AG04450 (cell line): ENCODE measurements at regions of chr11 and their contacts with region 1.

Region 1: DNA sequence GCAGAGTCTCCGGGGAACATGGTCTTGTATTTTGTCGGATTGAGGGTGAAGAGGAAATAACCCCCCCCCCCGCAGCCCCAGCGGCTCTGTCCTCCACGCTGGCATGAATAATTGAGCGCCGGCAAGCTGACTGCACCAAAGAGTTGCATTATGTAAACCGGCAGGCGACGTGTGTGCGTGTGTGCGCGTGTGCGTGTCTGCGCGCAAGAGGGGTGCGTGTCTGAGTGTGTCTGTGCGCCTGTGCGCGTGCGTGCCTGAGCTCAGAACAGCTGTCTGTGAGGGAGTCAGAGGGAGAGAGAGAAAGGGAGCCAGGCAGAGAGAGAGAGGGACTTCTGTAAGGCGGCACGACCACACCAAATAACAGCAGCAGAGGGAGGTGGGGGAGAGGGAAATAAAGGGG is 94.4 kb downstream of the SCN3B start:
- DNase-seq: peak; percentile 41
- H3K4me3 ChIP-seq: peak overlapping the region; percentile 52
- H3K27ac ChIP-seq: peak overlapping the region; percentile 39
- H3K27me3 ChIP-seq: peaks cover 3% of the 10 kb centered on the region
- CTCF ChIP-seq: no peak

Region 2: GRCh38 chr11:123083623-123084029 is 476.4 kb before region 1 on chr11:
- CTCF ChIA-PET with region 1: no interaction called
- POLR2A ChIA-PET with region 1: interaction called, 10 read pairs
- DNase-seq: peak; percentile 90
- H3K4me3 ChIP-seq: no peak overlapping the region
- H3K27ac ChIP-seq: peak overlapping the region; percentile 71
- H3K27me3 ChIP-seq: no peaks in the 10 kb centered on the region
- CTCF ChIP-seq: no peak

Region 3: DNA sequence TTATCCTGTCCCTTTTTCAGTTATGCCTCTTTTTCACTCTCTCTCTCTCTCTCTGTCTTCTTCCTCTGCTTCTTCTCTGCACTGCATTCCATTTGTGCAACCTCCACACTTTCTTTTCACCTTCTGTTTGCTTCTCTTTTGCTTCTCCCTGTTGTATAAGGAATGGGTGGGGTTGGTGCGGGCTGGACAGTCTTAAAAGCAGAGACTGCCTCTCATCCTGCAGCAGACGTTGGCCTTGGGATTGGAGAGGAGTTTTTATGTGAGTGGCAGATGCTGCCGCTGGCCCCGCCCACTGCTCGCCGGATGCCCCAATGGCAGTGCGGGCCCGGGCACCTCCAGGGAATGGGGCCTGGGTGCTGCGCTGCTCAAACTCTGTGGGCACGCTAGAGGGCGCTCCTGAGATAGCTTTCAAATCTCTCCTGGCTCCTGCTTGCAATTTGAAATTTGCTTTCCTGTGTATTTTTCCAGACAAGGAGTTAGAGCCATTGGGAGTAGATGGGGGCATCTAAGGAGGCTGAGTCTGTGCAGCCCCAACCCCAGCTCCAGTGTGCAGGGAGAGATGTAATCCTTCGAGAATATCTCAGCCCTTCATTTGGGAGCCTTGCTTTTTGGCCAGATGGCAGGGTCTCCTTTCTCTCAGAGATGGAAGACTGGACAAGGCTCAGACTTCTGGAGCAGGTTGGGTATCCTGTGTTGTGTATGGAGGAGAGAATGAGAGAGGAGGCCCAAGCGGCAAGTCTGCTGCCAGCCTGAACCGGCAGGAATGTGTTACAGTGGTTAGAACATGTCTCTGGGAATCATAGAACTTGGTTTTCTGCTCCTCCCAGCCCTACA is 48.8 kb before region 1 on chr11:
- CTCF ChIA-PET with region 1: interaction called, 22 read pairs
- POLR2A ChIA-PET with region 1: no interaction called
- DNase-seq: peak; percentile 80
- H3K4me3 ChIP-seq: no peak overlapping the region
- H3K27ac ChIP-seq: no peak overlapping the region
- H3K27me3 ChIP-seq: no peaks in the 10 kb centered on the region
- CTCF ChIP-seq: peak; percentile 88

Region 4: DNA sequence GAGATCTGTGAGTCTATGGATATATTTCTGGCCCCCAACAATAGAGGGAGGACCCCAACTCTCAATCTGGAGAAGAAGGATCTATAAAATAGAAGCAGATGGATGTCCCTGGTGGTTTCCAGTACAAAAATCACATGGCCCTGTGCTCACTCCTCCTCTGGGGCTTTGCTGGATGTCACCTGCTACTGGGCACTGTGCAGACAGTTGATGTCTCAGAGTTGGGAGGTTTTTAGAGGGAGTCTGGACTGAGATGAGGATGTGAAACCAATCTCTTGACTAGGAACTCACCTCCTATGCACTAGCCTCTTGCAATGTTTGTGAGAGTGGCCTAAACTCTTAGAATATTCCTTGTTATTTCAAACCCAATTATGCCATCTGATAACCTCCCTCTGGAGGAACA is 12.8 kb before region 1 on chr11:
- CTCF ChIA-PET with region 1: interaction called, 11 read pairs
- POLR2A ChIA-PET with region 1: interaction called, 9 read pairs
- DNase-seq: no peak
- H3K4me3 ChIP-seq: no peak overlapping the region
- H3K27ac ChIP-seq: no peak overlapping the region
- H3K27me3 ChIP-seq: no peaks in the 10 kb centered on the region
- CTCF ChIP-seq: no peak